Activated CD4-positive, alpha-beta T cell treated with anti-CD3 and anti-CD28 coated beads for 36 hours (primary cell): ENCODE measurements at regions of chr10 and their contacts with region 1.

Region 1: DNA sequence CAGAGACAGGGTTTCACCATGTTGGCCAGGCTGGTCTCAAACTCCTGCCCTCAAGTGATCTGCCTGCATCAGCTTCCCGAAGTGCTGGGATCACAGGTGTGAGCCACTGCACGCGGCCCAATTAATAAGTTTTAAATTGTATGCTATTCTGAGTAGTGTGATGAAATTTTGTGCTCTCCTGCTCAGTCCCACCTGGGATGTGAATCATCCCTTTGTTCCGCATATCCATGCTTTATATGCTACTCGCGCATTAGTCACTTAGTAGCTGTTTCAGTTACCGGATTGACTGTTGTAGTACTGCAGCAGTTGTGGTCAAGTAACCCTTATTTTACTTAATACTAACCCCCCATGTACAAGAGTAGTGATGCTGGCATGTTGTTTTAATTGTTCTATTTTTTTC is 47.3 kb upstream of the OIT3 start:
- DNase-seq: no peak
- ATAC-seq: peak; percentile 84
- H3K4me3 Mint-ChIP-seq: no peak overlapping the region
- H3K27ac Mint-ChIP-seq: no peak overlapping the region
- H3K4me1 Mint-ChIP-seq: peaks cover 4% of the 10 kb centered on the region
- H3K27me3 Mint-ChIP-seq: no peaks in the 10 kb centered on the region

Region 2: GRCh38 chr10:72802763-72803505 is 43.3 kb before region 1 on chr10:
- CTCF ChIA-PET with region 1: no interaction called
- POLR2A ChIA-PET with region 1: no interaction called
- intact Hi-C with region 1: no loop called
- DNase-seq: no peak
- ATAC-seq: peak; percentile 63
- H3K4me3 Mint-ChIP-seq: no peak overlapping the region
- H3K27ac Mint-ChIP-seq: no peak overlapping the region
- H3K4me1 Mint-ChIP-seq: peaks cover 23% of the 10 kb centered on the region
- H3K27me3 Mint-ChIP-seq: no peaks in the 10 kb centered on the region

Region 3: GRCh38 chr10:72814099-72814790 is 32.0 kb before region 1 on chr10:
- CTCF ChIA-PET with region 1: no interaction called
- POLR2A ChIA-PET with region 1: no interaction called
- intact Hi-C with region 1: no loop called
- DNase-seq: no peak
- ATAC-seq: no peak
- H3K4me3 Mint-ChIP-seq: no peak overlapping the region
- H3K27ac Mint-ChIP-seq: no peak overlapping the region
- H3K4me1 Mint-ChIP-seq: peaks cover 6% of the 10 kb centered on the region
- H3K27me3 Mint-ChIP-seq: no peaks in the 10 kb centered on the region

Region 4: GRCh38 chr10:73110345-73110849 is 264.2 kb after region 1 on chr10 and contains the start of gene NUDT13:
- CTCF ChIA-PET with region 1: no interaction called
- POLR2A ChIA-PET with region 1: interaction called, 11 read pairs
- intact Hi-C with region 1: no loop called
- DNase-seq: peak; percentile 60
- ATAC-seq: peak; percentile 89
- H3K4me3 Mint-ChIP-seq: peak within 1 kb of the TSS; percentile 71
- H3K27ac Mint-ChIP-seq: peak within 1 kb of the TSS; percentile 90
- H3K4me1 Mint-ChIP-seq: peaks cover 14% of the 10 kb centered on the region
- H3K27me3 Mint-ChIP-seq: no peaks in the 10 kb centered on the region
- total RNA-seq, gene NUDT13: 1.6 to 2.2 TPM